A549 (cell line): ENCODE measurements at regions of chr11 and their contacts with region 1.

Region 1: DNA sequence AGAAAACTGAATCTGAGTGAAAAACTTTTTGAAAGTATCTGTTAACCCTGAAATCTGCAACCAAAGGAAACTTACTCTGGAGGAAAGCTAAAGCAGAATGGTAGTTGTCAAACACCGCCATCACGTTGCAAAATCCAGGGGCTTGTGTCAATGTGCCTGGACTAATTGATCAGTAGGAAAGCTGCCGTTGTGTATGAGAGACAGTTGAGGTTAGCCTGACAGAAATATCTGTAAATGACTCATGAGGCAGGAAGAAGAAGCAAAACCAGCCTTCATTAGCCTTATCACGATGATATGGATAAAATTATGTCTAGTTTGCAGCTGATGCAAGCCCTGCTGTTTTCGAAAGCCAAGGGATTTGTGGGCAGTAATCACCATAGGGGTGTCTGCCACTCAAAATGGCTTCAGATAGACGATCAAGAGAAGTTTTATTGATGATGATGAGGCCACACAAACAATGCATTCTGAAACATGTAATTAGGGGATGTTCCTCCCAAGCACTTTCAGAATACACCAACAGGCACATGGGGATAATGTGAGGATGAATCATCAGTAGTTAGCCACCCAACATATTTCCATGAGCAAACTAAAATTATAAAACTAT is 8.9 kb downstream of the SCGB1A1 start:
- DNase-seq: no peak
- ATAC-seq: no peak
- H3K4me3 ChIP-seq: no peak overlapping the region
- H3K27ac ChIP-seq: peak overlapping the region; percentile 55 to 86
- H3K4me1 ChIP-seq: peaks cover 48% of the 10 kb centered on the region
- CTCF ChIP-seq: no peak
- EP300 ChIP-seq: no peak
- POLR2A ChIP-seq: no peak
- RAD21 ChIP-seq: no peak

Region 2: GRCh38 chr11:61985885-61986345 is 441.8 kb before region 1 on chr11:
- CTCF ChIA-PET with region 1: no interaction called
- POLR2A ChIA-PET with region 1: no interaction called
- DNase-seq: no peak
- ATAC-seq: no peak
- H3K4me3 ChIP-seq: no peak overlapping the region
- H3K27ac ChIP-seq: no peak overlapping the region
- H3K4me1 ChIP-seq: peaks cover 6% of the 10 kb centered on the region
- CTCF ChIP-seq: no peak
- EP300 ChIP-seq: no peak
- POLR2A ChIP-seq: no peak
- RAD21 ChIP-seq: no peak

Region 3: GRCh38 chr11:62411524-62411923 is 16.2 kb before region 1 on chr11:
- CTCF ChIA-PET with region 1: interaction called, 20 read pairs
- POLR2A ChIA-PET with region 1: no interaction called
- DNase-seq: no peak
- ATAC-seq: no peak
- H3K4me3 ChIP-seq: no peak overlapping the region
- H3K27ac ChIP-seq: peak overlapping the region in 1 of 2 experiments; percentile 11; a peak in 1 of 6 replicates
- H3K4me1 ChIP-seq: peaks cover 9% of the 10 kb centered on the region; the same call in 2 of the 3 replicates
- CTCF ChIP-seq: no peak
- EP300 ChIP-seq: no peak
- POLR2A ChIP-seq: no peak
- RAD21 ChIP-seq: no peak

Region 4: DNA sequence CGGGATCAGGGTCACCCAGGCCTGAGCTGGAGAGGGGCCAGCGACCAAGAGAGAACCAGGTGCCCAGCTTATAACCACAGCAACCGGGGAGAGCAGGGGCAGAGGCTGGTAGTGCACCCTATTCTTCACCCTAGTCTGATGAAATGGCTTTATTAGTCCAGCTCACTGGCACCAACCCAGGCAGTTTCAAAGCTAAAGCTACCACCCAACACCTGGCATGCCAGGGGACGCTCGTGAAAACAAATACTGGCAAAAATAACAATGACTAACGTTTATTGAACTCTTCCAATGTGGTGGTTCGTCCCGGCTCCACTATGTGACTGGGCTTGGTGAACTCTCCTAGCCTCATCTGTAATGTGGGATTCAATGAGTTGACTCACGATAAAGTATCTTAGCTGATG is 21.7 kb after region 1 on chr11:
- CTCF ChIA-PET with region 1: interaction called, 20 read pairs
- POLR2A ChIA-PET with region 1: no interaction called
- DNase-seq: peak in 1 of 2 experiments; percentile 45
- ATAC-seq: peak; percentile 76 to 79
- H3K4me3 ChIP-seq: no peak overlapping the region
- H3K27ac ChIP-seq: peak overlapping the region in 1 of 2 experiments; percentile 69; a peak in 3 of 6 replicates
- H3K4me1 ChIP-seq: peaks cover 22% of the 10 kb centered on the region; the same call in 2 of the 3 replicates
- CTCF ChIP-seq: no peak
- EP300 ChIP-seq: no peak
- POLR2A ChIP-seq: no peak
- RAD21 ChIP-seq: no peak

Region 5: DNA sequence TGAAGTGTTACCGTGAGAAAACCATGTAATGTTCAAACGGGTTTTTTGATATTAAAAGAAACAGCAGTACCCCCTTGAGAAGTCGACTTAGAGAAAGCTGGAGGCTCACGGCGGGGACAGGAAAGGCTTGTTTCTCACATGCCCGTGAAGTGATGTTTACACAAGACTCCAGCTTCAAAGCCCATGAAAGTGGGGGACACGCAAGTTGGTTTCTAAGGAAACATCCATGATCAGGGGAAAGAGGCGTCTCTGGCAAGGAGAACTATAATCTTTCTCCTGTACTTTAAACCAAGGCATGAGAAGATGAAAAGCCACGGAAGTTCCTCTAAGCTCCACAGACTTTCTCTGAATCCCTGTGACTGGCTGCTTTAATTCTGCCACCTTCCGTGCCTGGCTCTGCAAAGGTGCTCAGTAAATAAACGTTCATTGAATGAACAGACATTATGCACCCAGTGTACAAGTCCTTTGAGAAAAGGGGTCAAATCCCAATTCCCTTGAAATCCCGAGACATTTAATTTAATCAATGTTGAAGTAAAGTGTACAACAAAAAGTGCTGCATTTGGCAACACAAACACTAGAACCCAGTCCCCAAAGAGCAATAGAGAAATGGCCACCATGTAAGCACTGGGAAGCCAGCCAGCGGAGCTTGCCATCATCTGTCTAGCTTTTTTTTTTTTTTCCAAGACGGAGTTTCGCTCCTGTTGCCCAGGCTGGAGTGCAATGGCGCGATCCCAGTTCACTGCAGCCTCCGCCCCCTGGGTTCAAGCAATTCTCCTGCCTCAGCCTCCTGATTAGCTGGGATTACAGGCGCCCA is 60.2 kb after region 1 on chr11:
- CTCF ChIA-PET with region 1: interaction called, 13 read pairs
- POLR2A ChIA-PET with region 1: no interaction called
- DNase-seq: no peak
- ATAC-seq: no peak
- H3K4me3 ChIP-seq: no peak overlapping the region
- H3K27ac ChIP-seq: no peak overlapping the region
- H3K4me1 ChIP-seq: no peaks in the 10 kb centered on the region
- CTCF ChIP-seq: no peak
- EP300 ChIP-seq: no peak
- POLR2A ChIP-seq: no peak
- RAD21 ChIP-seq: no peak

Region 6: DNA sequence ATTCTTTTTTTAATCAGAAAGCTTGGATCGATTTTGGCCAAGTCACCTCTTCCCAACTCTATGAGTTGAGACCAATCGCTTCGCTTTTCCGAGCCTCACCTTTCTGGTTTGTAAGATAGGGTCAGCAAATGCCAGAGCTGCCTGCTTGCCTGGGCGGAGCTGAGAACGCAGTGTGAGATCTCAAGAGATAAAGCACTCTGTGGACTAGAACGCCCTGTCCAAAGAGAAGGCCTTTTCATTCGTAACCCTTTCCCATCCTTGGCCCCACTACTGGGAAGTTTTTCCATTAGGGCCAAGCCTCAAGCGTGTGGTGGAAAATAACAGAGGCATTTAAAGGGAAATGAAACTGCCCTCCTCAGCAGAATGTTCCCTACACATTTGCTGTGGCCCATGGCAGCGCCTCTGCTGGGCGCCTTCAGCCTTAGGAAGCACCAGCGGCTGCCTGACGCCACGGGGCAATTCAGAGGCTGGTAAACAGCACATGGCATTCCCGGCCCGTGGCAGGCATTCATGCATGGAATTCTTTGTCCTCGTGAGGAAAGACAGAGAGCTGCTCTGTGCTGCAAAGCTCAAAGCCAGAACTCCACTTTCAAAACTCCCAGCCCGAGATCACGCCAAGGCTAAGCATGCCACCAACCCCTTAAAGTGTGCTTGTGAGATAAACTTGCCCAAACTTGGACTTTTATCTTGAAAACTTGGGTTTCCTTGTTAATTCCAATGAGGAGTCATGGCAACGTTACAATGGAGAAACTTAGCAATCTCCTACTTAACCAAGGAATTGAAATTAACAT is 80.7 kb after region 1 on chr11:
- CTCF ChIA-PET with region 1: interaction called, 20 read pairs
- POLR2A ChIA-PET with region 1: no interaction called
- DNase-seq: peak; percentile 88 to 89
- ATAC-seq: peak; percentile 94 to 98
- H3K4me3 ChIP-seq: 0 out of 3 replicates have a peak overlapping the region, but pooled peaks have one; percentile 16
- H3K27ac ChIP-seq: peak overlapping the region; percentile 82 to 86
- H3K4me1 ChIP-seq: peaks cover 63% of the 10 kb centered on the region
- CTCF ChIP-seq: peak; percentile 50
- EP300 ChIP-seq: no peak
- POLR2A ChIP-seq: no peak
- RAD21 ChIP-seq: peak; percentile 22 to 47; a peak in 2 of 5 replicates

Region 7: GRCh38 chr11:62567018-62567633 is 139.4 kb after region 1 on chr11:
- CTCF ChIA-PET with region 1: interaction called, 24 read pairs
- POLR2A ChIA-PET with region 1: no interaction called
- DNase-seq: no peak
- ATAC-seq: no peak
- H3K4me3 ChIP-seq: no peak overlapping the region
- H3K27ac ChIP-seq: no peak overlapping the region
- H3K4me1 ChIP-seq: peaks cover 79% of the 10 kb centered on the region
- CTCF ChIP-seq: no peak
- EP300 ChIP-seq: no peak
- POLR2A ChIP-seq: no peak
- RAD21 ChIP-seq: no peak

Region 8: GRCh38 chr11:62601394-62602140 is 173.8 kb after region 1 on chr11 and contains the start of gene MTA2:
- CTCF ChIA-PET with region 1: interaction called, 10 read pairs
- POLR2A ChIA-PET with region 1: no interaction called
- DNase-seq: peak; percentile 87 to 98
- ATAC-seq: peak; percentile 86 to 92
- H3K4me3 ChIP-seq: peak within 1 kb of the TSS; percentile 92
- H3K27ac ChIP-seq: peak within 1 kb of the TSS; percentile 95 to 98
- H3K4me1 ChIP-seq: peaks cover 32% of the 10 kb centered on the region
- CTCF ChIP-seq: no peak
- EP300 ChIP-seq: no peak
- POLR2A ChIP-seq: peak; percentile 22; the same call in 1 of the 2 replicates
- RAD21 ChIP-seq: no peak
- polyA plus RNA-seq, gene MTA2: 21.8 and 44.3 TPM in 2 replicates